ENCODE measurements at regions of chr3 and their contacts with region 1.

Region 1: GRCh38 chr3:170414202-170414663 is 4.4 kb upstream of the CLDN11 start:
- DNase-seq: peak; percentile 82
- H3K4me3 ChIP-seq: no peak overlapping the region
- H3K27ac ChIP-seq: no peak overlapping the region
- H3K4me1 ChIP-seq: no peaks in the 10 kb centered on the region
- H3K27me3 ChIP-seq: no peaks in the 10 kb centered on the region
- CTCF ChIP-seq: peak; percentile 93

Region 2: GRCh38 chr3:169764452-169765274 is 649.6 kb before region 1 on chr3 and contains the start of gene TERC:
- CTCF ChIA-PET with region 1: no interaction called
- POLR2A ChIA-PET with region 1: no interaction called
- intact Hi-C with region 1: loop called (anchors 2 kb)
- DNase-seq: peak; percentile 92
- H3K4me3 ChIP-seq: peak within 1 kb of the TSS; percentile 73
- H3K27ac ChIP-seq: peak within 1 kb of the TSS; percentile 90
- H3K4me1 ChIP-seq: no peaks in the 10 kb centered on the region
- H3K27me3 ChIP-seq: no peaks in the 10 kb centered on the region
- CTCF ChIP-seq: no peak
- total RNA-seq, gene TERC: 5.8 and 16.7 TPM in 2 replicates

Region 3: DNA sequence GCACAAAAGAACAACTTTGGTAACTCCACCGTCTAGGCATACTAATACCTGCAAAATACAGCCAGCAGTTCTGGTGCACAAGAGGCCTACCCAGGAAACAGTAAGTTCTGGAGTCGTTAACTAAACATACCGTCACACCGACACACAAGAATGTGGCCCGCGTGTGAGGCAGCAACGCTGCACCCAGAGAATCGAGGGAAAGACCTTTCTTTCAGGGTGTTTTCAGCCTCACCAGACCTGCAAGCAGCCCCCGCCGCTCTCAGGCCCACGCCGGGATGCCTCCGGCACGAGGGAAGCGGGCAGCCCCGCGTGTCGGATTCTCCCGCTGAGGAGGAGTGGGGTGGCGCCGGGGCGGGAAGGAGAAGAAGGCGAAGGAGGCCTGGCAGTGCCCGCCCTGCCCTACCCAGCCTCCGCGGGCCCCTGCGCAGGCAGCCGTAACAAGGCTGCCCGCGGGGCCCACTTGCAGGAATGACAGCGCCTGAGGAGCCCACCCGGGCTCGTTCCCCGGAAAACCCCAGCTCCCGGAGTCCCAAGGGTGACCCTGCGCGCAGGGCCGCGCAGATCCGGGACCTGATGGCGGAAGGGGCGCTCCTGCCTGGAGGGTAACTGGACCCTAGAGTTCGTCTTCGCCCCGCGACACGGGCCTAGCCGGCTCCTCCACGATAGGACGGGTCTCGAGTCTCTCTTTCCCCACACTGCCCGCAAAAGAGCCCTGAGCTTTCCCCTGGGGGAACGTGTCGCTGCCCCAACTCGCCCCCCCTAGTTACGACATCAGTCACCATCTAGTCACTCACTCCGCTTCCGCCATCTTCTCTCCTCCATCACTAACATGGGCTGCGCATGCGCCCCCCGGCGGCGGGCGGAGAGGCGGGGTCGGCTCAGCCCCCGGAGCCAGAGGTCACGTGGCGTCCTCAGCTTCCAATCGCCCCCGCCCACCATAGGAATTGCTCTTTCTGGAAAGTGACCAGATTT is 233.0 kb before region 1 on chr3 and contains the start of gene PHC3:
- CTCF ChIA-PET with region 1: interaction called, 10 read pairs
- POLR2A ChIA-PET with region 1: no interaction called
- intact Hi-C with region 1: no loop called
- DNase-seq: peak; percentile 96
- H3K4me3 ChIP-seq: peak within 1 kb of the TSS; percentile 82
- H3K27ac ChIP-seq: peak within 1 kb of the TSS; percentile 93
- H3K4me1 ChIP-seq: peaks cover 6% of the 10 kb centered on the region
- H3K27me3 ChIP-seq: no peaks in the 10 kb centered on the region
- CTCF ChIP-seq: no peak
- total RNA-seq, gene PHC3: 49.2 and 55.4 TPM in 2 replicates

Region 4: GRCh38 chr3:170689893-170690660 is 275.8 kb after region 1 on chr3:
- CTCF ChIA-PET with region 1: interaction called, 6 read pairs
- POLR2A ChIA-PET with region 1: no interaction called
- intact Hi-C with region 1: loop called (anchors 2 kb)
- DNase-seq: peak; percentile 67
- H3K4me3 ChIP-seq: no peak overlapping the region
- H3K27ac ChIP-seq: no peak overlapping the region
- H3K4me1 ChIP-seq: no peaks in the 10 kb centered on the region
- H3K27me3 ChIP-seq: no peaks in the 10 kb centered on the region
- CTCF ChIP-seq: peak; percentile 86

Region 5: GRCh38 chr3:170848292-170848917 is 434.2 kb after region 1 on chr3:
- CTCF ChIA-PET with region 1: interaction called, 11 read pairs
- POLR2A ChIA-PET with region 1: no interaction called
- intact Hi-C with region 1: loop called (anchors 1 kb)
- DNase-seq: peak; percentile 26
- H3K4me3 ChIP-seq: no peak overlapping the region
- H3K27ac ChIP-seq: no peak overlapping the region
- H3K4me1 ChIP-seq: no peaks in the 10 kb centered on the region
- H3K27me3 ChIP-seq: no peaks in the 10 kb centered on the region
- CTCF ChIP-seq: peak; percentile 59